Calu3 (cell line): ENCODE measurements at regions of chr1 and their contacts with region 1.

Region 1: DNA sequence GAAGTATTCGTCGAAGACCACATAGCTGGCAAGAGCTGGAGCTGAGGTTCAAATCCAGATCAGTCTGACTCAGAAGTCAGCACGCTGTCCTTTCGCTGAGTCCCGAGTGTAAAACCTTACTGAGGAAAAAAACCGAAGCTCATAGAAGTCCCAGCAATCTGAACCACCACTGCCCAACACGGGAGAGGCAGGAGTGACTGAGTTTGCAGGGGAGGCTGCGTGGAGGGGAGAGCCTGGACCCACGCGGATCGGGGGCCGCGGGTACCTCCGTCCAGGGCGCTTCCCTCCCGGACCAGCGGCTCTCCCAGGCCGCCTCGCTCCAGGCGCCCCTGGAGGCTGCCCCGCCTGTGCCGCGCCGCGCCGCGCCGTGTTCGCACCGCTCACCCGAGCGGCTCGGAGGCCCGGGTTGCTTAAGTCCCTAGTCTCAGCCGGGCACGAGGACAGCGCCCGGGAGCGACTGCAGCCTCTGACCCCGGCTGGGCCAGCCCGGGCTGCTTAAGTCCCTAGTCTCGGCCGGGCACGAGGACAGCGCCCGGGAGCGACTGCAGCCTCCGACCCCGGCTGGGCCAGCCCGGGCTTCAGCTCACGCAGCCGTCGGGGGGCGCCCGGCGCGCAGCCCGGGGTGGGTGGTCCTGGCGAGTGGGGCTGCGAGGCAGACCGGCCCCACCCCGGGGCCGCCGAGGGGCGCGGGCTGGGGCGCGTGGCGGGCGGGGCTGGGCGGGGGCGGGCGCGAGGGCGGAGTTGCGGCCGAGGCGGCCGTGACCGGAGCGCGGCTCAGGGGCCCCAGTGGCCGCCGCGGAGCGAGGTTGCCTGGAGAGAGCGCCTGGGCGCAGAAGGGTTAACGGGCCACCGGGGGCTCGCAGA is at the start of gene ADAMTSL4:
- DNase-seq: peak; percentile 69
- H3K4me3 Mint-ChIP-seq: peak within 1 kb of the TSS; percentile 75
- H3K27ac Mint-ChIP-seq: peak within 1 kb of the TSS; percentile 73
- H3K4me1 Mint-ChIP-seq: peaks cover 22% of the 10 kb centered on the region
- H3K27me3 Mint-ChIP-seq: peaks cover 14% of the 10 kb centered on the region
- CTCF ChIP-seq: no peak
- total RNA-seq, gene ADAMTSL4: 1.9 and 2.7 TPM in 2 replicates

Region 2: DNA sequence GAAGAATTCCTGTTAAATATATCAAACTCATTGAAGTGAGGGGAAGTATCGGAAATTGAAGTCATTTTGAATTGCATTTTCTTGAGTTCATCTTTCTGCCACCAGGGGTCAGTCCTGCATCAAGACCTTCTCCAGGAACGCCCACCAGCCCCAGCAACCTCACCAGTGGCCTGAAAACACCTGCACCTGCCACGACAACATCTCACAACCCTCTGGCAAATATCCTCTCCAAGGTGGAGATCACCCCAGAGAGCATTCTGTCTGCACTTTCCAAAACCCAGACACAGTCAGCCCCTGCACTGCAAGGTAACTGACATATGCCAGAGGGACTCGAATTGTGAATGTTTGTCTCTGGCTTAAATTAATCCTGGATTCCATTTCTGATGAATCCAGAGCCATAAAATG is 84.4 kb before region 1 on chr1:
- CTCF ChIA-PET with region 1: no interaction called
- intact Hi-C with region 1: loop called (anchors 5 kb)
- DNase-seq: peak; percentile 77
- H3K4me3 Mint-ChIP-seq: no peak overlapping the region
- H3K27ac Mint-ChIP-seq: no peak overlapping the region
- H3K4me1 Mint-ChIP-seq: peaks cover 8% of the 10 kb centered on the region
- H3K27me3 Mint-ChIP-seq: no peaks in the 10 kb centered on the region
- CTCF ChIP-seq: peak; percentile 70

Region 3: GRCh38 chr1:150486964-150487762 is 61.7 kb before region 1 on chr1 and contains the start of gene TARS2:
- CTCF ChIA-PET with region 1: interaction called, 11 read pairs
- intact Hi-C with region 1: loop called (anchors 5 kb)
- DNase-seq: peak; percentile 98
- H3K4me3 Mint-ChIP-seq: peak within 1 kb of the TSS; percentile 88
- H3K27ac Mint-ChIP-seq: peak within 1 kb of the TSS; percentile 87
- H3K4me1 Mint-ChIP-seq: peaks cover 10% of the 10 kb centered on the region
- H3K27me3 Mint-ChIP-seq: no peaks in the 10 kb centered on the region
- CTCF ChIP-seq: peak; percentile 48
- total RNA-seq, gene TARS2: 42.2 and 51.7 TPM in 2 replicates

Region 4: DNA sequence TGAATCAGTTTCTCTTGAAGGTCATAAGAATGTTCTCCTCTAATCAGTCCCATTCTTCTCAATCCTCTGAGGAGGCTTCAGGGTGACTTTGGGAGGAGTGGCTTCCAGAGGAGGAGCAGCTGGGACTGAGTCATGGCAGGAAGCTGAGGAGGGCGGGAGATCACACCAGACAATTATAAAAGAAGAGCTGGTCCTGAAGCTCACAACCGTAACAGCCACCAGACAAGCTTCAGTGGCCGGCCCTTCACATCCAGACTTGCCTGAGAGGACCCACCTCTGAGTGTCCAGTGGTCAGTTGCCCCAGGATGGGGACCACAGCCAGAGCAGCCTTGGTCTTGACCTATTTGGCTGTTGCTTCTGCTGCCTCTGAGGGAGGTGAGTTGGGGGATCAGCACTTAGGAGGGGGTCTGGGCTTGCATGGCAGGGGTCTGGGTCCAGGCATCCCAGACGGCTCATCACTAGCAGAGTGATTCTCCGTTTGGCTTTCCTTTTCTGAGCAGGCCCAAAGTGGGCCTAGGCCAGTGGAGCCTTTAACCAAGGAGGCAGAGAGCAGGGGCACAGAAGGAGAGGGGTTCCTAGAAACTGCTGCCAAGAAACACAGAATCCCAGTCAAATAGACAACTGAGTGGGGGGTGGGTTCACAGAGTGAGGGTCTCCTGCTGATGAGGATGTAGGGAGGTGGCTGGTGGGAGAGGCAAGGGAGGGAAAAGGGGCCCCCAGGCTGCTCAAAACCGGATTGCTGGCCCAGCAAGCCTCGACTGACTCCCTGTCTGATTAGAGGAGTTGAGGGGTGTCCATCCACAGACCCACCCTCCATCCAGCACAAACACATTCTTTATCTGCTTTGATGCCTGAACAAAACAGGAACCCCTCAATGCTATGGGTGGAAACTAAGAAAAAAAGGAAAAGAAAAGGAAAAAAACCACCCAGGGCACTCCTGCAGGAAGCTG is 40.7 kb before region 1 on chr1 and contains the start of gene ECM1:
- CTCF ChIA-PET with region 1: no interaction called
- intact Hi-C with region 1: no loop called
- DNase-seq: peak; percentile 30
- H3K4me3 Mint-ChIP-seq: no peak within 1 kb of the TSS
- H3K27ac Mint-ChIP-seq: no peak within 1 kb of the TSS
- H3K4me1 Mint-ChIP-seq: peaks cover 7% of the 10 kb centered on the region
- H3K27me3 Mint-ChIP-seq: no peaks in the 10 kb centered on the region
- CTCF ChIP-seq: no peak
- total RNA-seq, gene ECM1: 1.6 and 2.8 TPM in 2 replicates